Activated CD8-positive, alpha-beta T cell treated with anti-CD3 and anti-CD28 coated beads, Interleukin-2, amount 10 ng/mL, durations not matched to agents 7 days and 5 days (primary cell): ENCODE measurements at regions of chr4 and their contacts with region 1.

Region 1: GRCh38 chr4:26325191-26325590 is 4.4 kb downstream of the RBPJ start:
- DNase-seq: peak; percentile 57
- ATAC-seq: peak; percentile 23
- H3K4me3 Mint-ChIP-seq: no peak overlapping the region
- H3K27ac Mint-ChIP-seq: no peak overlapping the region
- H3K4me1 Mint-ChIP-seq: peaks cover 39% of the 10 kb centered on the region
- H3K27me3 Mint-ChIP-seq: no peaks in the 10 kb centered on the region

Region 2: GRCh38 chr4:25986807-25987206 is 338.4 kb before region 1 on chr4:
- CTCF ChIA-PET with region 1: interaction called, 24 read pairs
- POLR2A ChIA-PET with region 1: no interaction called
- DNase-seq: no peak
- ATAC-seq: no peak
- H3K4me3 Mint-ChIP-seq: no peak overlapping the region
- H3K27ac Mint-ChIP-seq: no peak overlapping the region
- H3K4me1 Mint-ChIP-seq: peaks cover 12% of the 10 kb centered on the region
- H3K27me3 Mint-ChIP-seq: peaks cover 8% of the 10 kb centered on the region

Region 3: GRCh38 chr4:26061248-26061986 is 263.8 kb before region 1 on chr4:
- CTCF ChIA-PET with region 1: interaction called, 48 read pairs
- POLR2A ChIA-PET with region 1: no interaction called
- DNase-seq: peak; percentile 51
- ATAC-seq: peak; percentile 78
- H3K4me3 Mint-ChIP-seq: no peak overlapping the region
- H3K27ac Mint-ChIP-seq: no peak overlapping the region
- H3K4me1 Mint-ChIP-seq: peaks cover 10% of the 10 kb centered on the region
- H3K27me3 Mint-ChIP-seq: peaks cover 7% of the 10 kb centered on the region

Region 4: DNA sequence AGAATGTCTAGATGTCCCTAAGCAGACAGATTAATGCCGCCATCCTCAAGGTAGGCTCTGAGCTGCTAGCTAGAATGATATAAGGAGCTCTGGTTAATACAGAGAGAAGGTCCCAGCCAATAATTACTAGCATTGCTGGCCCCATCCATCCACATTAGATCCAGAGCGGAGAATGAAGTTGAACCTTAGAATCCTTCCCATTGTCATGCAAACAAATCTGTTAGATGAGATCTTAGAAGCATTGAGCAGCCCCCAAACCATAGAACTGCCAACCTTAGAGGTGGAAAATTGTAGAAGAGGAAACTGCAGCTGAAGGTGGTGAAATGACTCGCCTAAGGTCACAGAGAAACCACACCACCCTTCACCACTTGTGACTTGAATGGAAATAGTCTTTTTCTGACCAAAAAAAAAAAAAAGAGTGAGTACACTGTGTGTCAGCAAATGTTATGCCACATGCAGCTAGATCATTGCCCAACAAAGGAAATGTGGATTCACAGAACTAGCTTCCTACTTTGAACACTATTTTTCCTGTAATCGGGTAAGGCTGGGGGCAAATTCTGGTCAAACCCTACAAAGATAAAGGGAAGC is 249.1 kb before region 1 on chr4:
- CTCF ChIA-PET with region 1: interaction called, 11 read pairs
- POLR2A ChIA-PET with region 1: no interaction called
- DNase-seq: peak; percentile 74
- ATAC-seq: peak; percentile 80
- H3K4me3 Mint-ChIP-seq: peak overlapping the region; percentile 22
- H3K27ac Mint-ChIP-seq: peak overlapping the region; percentile 62
- H3K4me1 Mint-ChIP-seq: peaks cover 45% of the 10 kb centered on the region
- H3K27me3 Mint-ChIP-seq: no peaks in the 10 kb centered on the region

Region 5: DNA sequence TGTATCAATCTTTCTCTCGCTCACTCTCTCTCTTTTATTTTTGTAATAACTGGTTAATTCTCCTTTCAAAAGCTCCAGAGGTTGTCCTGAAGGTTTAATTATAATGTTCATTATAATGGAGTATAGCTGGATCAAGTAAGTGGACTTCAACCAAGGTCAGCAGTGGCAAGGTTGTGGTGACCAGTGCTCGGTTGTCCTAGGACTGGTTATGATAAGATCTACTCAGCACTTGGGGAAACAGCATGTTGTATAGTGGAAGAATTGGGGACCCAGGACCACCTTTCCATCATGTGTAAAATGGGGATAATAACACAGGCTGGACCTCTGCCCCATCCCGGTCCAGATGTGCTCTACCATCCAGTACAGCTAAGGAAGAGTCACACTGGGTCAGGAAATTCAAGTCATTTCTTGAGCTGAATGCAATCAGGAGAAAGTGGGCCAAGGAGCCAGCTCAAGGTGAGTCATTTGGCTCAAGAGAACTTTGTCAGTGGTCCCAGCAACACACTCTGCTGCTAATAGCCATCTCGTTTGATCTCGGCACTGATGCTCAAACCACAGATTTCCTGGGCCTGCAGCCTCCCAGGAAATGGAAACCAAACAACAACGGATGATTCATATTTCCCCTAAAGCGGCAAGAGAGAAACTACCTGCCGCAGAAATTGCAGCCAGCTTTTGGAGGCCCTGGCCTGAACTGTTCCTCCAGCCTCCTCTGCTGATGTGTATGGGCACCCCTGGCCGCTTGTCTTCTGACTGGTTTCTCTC is 128.0 kb before region 1 on chr4:
- CTCF ChIA-PET with region 1: interaction called, 15 read pairs
- POLR2A ChIA-PET with region 1: interaction called, 15 read pairs
- DNase-seq: peak; percentile 86
- ATAC-seq: peak; percentile 95
- H3K4me3 Mint-ChIP-seq: peak overlapping the region; percentile 62
- H3K27ac Mint-ChIP-seq: peak overlapping the region; percentile 93
- H3K4me1 Mint-ChIP-seq: peaks cover 63% of the 10 kb centered on the region
- H3K27me3 Mint-ChIP-seq: no peaks in the 10 kb centered on the region